ENCODE measurements at regions of chr1 and their contacts with region 1.

Region 1: GRCh38 chr1:192860478-192861185 is 51.8 kb downstream of the RGS2 start:
- DNase-seq: no peak
- H3K4me3 Mint-ChIP-seq: no peak overlapping the region
- H3K27ac Mint-ChIP-seq: no peak overlapping the region
- H3K4me1 Mint-ChIP-seq: peaks cover 12% of the 10 kb centered on the region
- H3K27me3 Mint-ChIP-seq: no peaks in the 10 kb centered on the region
- CTCF ChIP-seq: no peak

Region 2: GRCh38 chr1:192832492-192832891 is 28.1 kb before region 1 on chr1:
- CTCF ChIA-PET with region 1: no interaction called
- POLR2A ChIA-PET with region 1: interaction called, 11 read pairs
- intact Hi-C with region 1: no loop called
- DNase-seq: no peak
- H3K4me3 Mint-ChIP-seq: no peak overlapping the region
- H3K27ac Mint-ChIP-seq: no peak overlapping the region
- H3K4me1 Mint-ChIP-seq: peaks cover 30% of the 10 kb centered on the region
- H3K27me3 Mint-ChIP-seq: no peaks in the 10 kb centered on the region
- CTCF ChIP-seq: no peak

Region 3: DNA sequence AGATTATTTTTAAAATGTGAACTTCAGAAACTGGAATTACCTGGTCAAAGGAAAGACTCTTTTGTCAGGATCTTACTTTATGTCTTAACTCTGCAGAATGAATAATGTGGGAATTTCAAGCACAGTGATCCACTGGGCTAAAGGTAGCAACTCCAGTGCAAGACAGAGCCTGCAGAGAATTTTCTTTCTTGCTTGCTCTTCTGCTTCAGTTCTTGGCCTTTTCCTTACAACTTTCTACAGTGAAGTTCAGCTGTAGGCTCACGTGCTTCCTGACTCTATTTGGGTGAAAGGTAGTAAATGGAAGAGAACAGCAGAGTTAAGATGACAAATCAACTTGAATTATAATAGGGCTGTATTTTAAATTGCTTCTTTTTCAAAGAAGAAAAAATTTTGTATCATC is 12.4 kb after region 1 on chr1:
- CTCF ChIA-PET with region 1: interaction called, 9 read pairs
- POLR2A ChIA-PET with region 1: interaction called, 11 read pairs
- intact Hi-C with region 1: no loop called
- DNase-seq: no peak
- H3K4me3 Mint-ChIP-seq: no peak overlapping the region
- H3K27ac Mint-ChIP-seq: no peak overlapping the region
- H3K4me1 Mint-ChIP-seq: peaks cover 6% of the 10 kb centered on the region
- H3K27me3 Mint-ChIP-seq: no peaks in the 10 kb centered on the region
- CTCF ChIP-seq: no peak

Measured in MCF 10A (cell line).